Activated CD8-positive, alpha-beta T cell treated with anti-CD3 and anti-CD28 coated beads, Interleukin-2, amount 10 ng/mL, durations not matched to agents 7 days and 5 days (primary cell): ENCODE measurements at regions of chr6 and their contacts with region 1.

Region 1: GRCh38 chr6:149484733-149485700 is at the start of gene ZC3H12D:
- DNase-seq: peak; percentile 82
- ATAC-seq: peak; percentile 78
- H3K4me3 Mint-ChIP-seq: peak within 1 kb of the TSS; percentile 84
- H3K27ac Mint-ChIP-seq: peak within 1 kb of the TSS; percentile 95
- H3K4me1 Mint-ChIP-seq: peaks cover 59% of the 10 kb centered on the region
- H3K27me3 Mint-ChIP-seq: no peaks in the 10 kb centered on the region
- total RNA-seq, gene ZC3H12D: 6.0 to 6.1 TPM

Region 2: GRCh38 chr6:149473080-149474052 is 11.7 kb before region 1 on chr6:
- CTCF ChIA-PET with region 1: interaction called, 12 read pairs
- POLR2A ChIA-PET with region 1: interaction called, 4 read pairs
- DNase-seq: no peak
- ATAC-seq: no peak
- H3K4me3 Mint-ChIP-seq: no peak overlapping the region
- H3K27ac Mint-ChIP-seq: no peak overlapping the region
- H3K4me1 Mint-ChIP-seq: peaks cover 32% of the 10 kb centered on the region
- H3K27me3 Mint-ChIP-seq: no peaks in the 10 kb centered on the region

Region 3: GRCh38 chr6:149499066-149499465 is 14.0 kb after region 1 on chr6:
- CTCF ChIA-PET with region 1: interaction called, 24 read pairs
- POLR2A ChIA-PET with region 1: interaction called, 26 read pairs
- DNase-seq: no peak
- ATAC-seq: no peak
- H3K4me3 Mint-ChIP-seq: no peak overlapping the region
- H3K27ac Mint-ChIP-seq: no peak overlapping the region
- H3K4me1 Mint-ChIP-seq: peaks cover 35% of the 10 kb centered on the region
- H3K27me3 Mint-ChIP-seq: no peaks in the 10 kb centered on the region

Region 4: GRCh38 chr6:149771925-149772324 is 286.9 kb after region 1 on chr6:
- CTCF ChIA-PET with region 1: no interaction called
- POLR2A ChIA-PET with region 1: no interaction called
- DNase-seq: no peak
- ATAC-seq: no peak
- H3K4me3 Mint-ChIP-seq: no peak overlapping the region
- H3K27ac Mint-ChIP-seq: peak overlapping the region; percentile 43
- H3K4me1 Mint-ChIP-seq: peaks cover 3% of the 10 kb centered on the region
- H3K27me3 Mint-ChIP-seq: no peaks in the 10 kb centered on the region